ENCODE measurements at regions of chr18 and their contacts with region 1.

Region 1: GRCh38 chr18:62131301-62131909 is 55.5 kb downstream of the PIGN start:
- DNase-seq: peak; percentile 50
- ATAC-seq: peak; percentile 43 to 65

Region 2: GRCh38 chr18:60684843-60685513 is 1446.4 kb before region 1 on chr18:
- intact Hi-C with region 1: loop called in 1 of 2 experiments (anchors 10 kb)
- DNase-seq: no peak
- ATAC-seq: no peak

Region 3: DNA sequence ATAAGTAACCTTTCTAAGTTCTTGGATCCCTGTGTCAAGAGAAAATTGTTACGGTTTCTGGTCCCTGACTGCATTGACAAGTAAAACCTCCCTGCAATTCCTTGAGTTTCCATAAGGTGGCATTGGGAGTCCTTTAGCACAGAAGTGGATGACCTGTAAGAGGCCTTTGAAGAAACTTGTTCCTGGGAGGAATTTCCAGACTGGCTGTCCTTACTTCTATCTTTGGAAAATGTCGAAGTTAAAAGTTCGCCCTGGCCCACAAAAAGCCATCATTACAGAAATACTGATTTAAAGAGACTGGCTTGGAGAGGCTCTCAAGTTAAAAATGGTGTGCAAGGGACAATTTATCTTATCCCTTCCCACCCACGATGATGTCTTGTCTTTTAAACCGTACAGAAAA is 579.8 kb before region 1 on chr18:
- intact Hi-C with region 1: loop called (anchors 5 kb)
- DNase-seq: no peak
- ATAC-seq: peak; percentile 70 to 82

Region 4: GRCh38 chr18:61635901-61636528 is 495.4 kb before region 1 on chr18:
- intact Hi-C with region 1: loop called (anchors 5 kb)
- DNase-seq: peak; percentile 44
- ATAC-seq: peak; percentile 82 to 88

Region 5: GRCh38 chr18:61901323-61901986 is 229.9 kb before region 1 on chr18:
- intact Hi-C with region 1: loop called (anchors 5 to 10 kb)
- DNase-seq: no peak
- ATAC-seq: peak; percentile 62 to 90